ENCODE measurements at regions of chr14 and their contacts with region 1.

Region 1: GRCh38 chr14:100383727-100384158 is 60.6 kb downstream of the SLC25A47 start:
- DNase-seq: peak; percentile 56 to 68 (median 67)
- H3K4me3 ChIP-seq: no peak overlapping the region
- H3K4me3 Mint-ChIP-seq: no peak overlapping the region
- H3K27ac ChIP-seq: no peak overlapping the region
- H3K27ac Mint-ChIP-seq: peak overlapping the region in 2 of 7 donors; percentile 12 to 79
- H3K4me1 ChIP-seq: peaks cover 3% of the 10 kb centered on the region in 2 donors
- H3K4me1 Mint-ChIP-seq: peaks cover 10% of the 10 kb centered on the region
- H3K27me3 ChIP-seq: no peaks in the 10 kb centered on the region
- H3K27me3 Mint-ChIP-seq: no peaks in the 10 kb centered on the region
- CTCF ChIP-seq: peak; percentile 94

Region 2: DNA sequence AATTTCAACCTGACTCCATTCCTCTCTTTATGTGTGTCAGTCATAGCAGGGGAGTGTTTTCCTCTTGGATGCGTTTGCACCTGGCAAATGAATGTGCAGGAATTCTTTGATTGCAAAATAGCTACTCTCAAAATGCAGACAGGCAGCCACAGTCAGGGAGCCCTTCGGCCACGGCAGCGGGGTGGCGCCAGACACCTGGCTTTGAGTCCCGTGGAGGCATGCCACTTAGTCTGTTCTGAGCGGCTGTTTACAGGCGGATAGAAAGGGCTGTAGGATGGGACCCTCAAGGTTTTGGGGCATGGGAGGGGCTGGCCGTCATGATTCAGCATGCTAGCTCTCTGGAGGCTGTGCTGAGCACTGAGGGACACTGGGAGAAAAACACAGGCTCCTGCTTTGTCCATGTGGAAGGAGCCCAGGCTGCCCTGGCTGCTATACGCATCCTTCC is 56.5 kb after region 1 on chr14:
- intact Hi-C with region 1: loop called in 1 of 2 experiments (anchors 1 kb)
- DNase-seq: peak in 2 of 3 donors; percentile 26 to 51
- H3K4me3 ChIP-seq: no peak overlapping the region
- H3K4me3 Mint-ChIP-seq: no peak overlapping the region
- H3K27ac ChIP-seq: no peak overlapping the region
- H3K27ac Mint-ChIP-seq: peak overlapping the region in 2 of 7 donors; percentile 15 to 54
- H3K4me1 ChIP-seq: peaks cover 13% of the 10 kb centered on the region in 2 donors
- H3K4me1 Mint-ChIP-seq: peaks cover 36% of the 10 kb centered on the region
- H3K27me3 ChIP-seq: no peaks in the 10 kb centered on the region
- H3K27me3 Mint-ChIP-seq: no peaks in the 10 kb centered on the region
- CTCF ChIP-seq: peak; percentile 81

Region 3: GRCh38 chr14:100547633-100548294 is 164.0 kb after region 1 on chr14:
- intact Hi-C with region 1: loop called (anchors 10 kb)
- DNase-seq: peak; percentile 86 to 95 (median 93)
- H3K4me3 ChIP-seq: peak overlapping the region in 1 of 3 experiments; percentile 71
- H3K4me3 Mint-ChIP-seq: peak overlapping the region; percentile 84 to 93
- H3K27ac ChIP-seq: peak overlapping the region; percentile 78 to 99
- H3K27ac Mint-ChIP-seq: peak overlapping the region; percentile 87 to 99 (median 94)
- H3K4me1 ChIP-seq: peaks cover 28 to 32% of the 10 kb centered on the region in 2 donors
- H3K4me1 Mint-ChIP-seq: peaks cover 39% of the 10 kb centered on the region
- H3K27me3 ChIP-seq: no peaks in the 10 kb centered on the region
- H3K27me3 Mint-ChIP-seq: peaks cover 6 to 25% (median 17%) of the 10 kb centered on the region in 3 donors
- CTCF ChIP-seq: no peak

Region 4: GRCh38 chr14:100654814-100655740 is 271.3 kb after region 1 on chr14:
- intact Hi-C with region 1: loop called in 1 of 2 experiments (anchors 2 kb)
- DNase-seq: peak in 2 of 3 donors; percentile 21 to 37
- H3K4me3 ChIP-seq: no peak overlapping the region
- H3K4me3 Mint-ChIP-seq: no peak overlapping the region
- H3K27ac ChIP-seq: no peak overlapping the region
- H3K27ac Mint-ChIP-seq: no peak overlapping the region
- H3K4me1 ChIP-seq: peaks cover 0 to 6% of the 10 kb centered on the region in 2 donors
- H3K4me1 Mint-ChIP-seq: peaks cover 2% of the 10 kb centered on the region
- H3K27me3 ChIP-seq: peaks cover 0 to 9% of the 10 kb centered on the region in 2 donors
- H3K27me3 Mint-ChIP-seq: peaks cover 8 to 20% (median 18%) of the 10 kb centered on the region in 3 donors
- CTCF ChIP-seq: peak; percentile 89